ENCODE measurements at regions of chr11 and their contacts with region 1.

Region 1: GRCh38 chr11:62556108-62556871 is 9.7 kb upstream of the AHNAK start:
- DNase-seq: peak; percentile 93 to 99 (median 98)
- H3K4me3 ChIP-seq: peak overlapping the region in 6 of 7 experiments; percentile 4 to 70 (median 52)
- H3K27ac ChIP-seq: peak overlapping the region; percentile 96 to 97
- H3K4me1 ChIP-seq: peaks cover 23 to 93% (median 89%) of the 10 kb centered on the region in 4 experiments
- H3K27me3 ChIP-seq: no peaks in the 10 kb centered on the region

Region 2: GRCh38 chr11:62573592-62574362 is 17.5 kb after region 1 on chr11 and contains the start of gene EEF1G:
- CTCF ChIA-PET with region 1: interaction called, 36 read pairs
- POLR2A ChIA-PET with region 1: no interaction called
- DNase-seq: peak; percentile 100
- H3K4me3 ChIP-seq: peak within 1 kb of the TSS; percentile 86 to 99 (median 96)
- H3K27ac ChIP-seq: peak within 1 kb of the TSS; percentile 88 to 95
- H3K4me1 ChIP-seq: peaks cover 10 to 38% (median 30%) of the 10 kb centered on the region in 4 experiments
- H3K27me3 ChIP-seq: no peaks in the 10 kb centered on the region